ENCODE measurements at regions of chr1 and their contacts with region 1.

Region 1: GRCh38 chr1:242398351-242398750 is 126.1 kb downstream of the PLD5 start:
- DNase-seq: no peak
- ATAC-seq: no peak
- H3K4me3 ChIP-seq: no peak overlapping the region
- H3K27ac ChIP-seq: no peak overlapping the region
- H3K4me1 ChIP-seq: no peaks in the 10 kb centered on the region
- H3K27me3 ChIP-seq: no peaks in the 10 kb centered on the region

Region 2: DNA sequence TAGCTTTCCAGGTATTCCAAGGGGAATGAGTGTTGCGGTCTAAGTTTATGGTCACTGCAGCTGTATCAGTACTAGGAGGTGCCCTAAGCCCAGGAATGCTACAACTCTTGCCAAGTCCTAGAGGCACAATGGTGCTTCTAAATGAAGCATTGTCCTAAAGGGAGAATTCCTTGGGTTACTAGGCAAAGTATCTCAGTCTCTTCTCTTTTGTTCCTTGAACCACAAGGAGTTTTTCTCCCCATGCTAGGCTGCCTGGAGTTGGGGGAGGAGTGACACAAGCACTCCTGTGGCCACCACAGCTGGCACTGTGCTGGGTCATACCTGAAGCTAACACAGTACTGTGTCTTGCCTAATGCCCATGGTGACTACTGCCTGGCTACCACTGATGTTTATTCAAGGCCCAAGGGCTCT is 815.4 kb before region 1 on chr1:
- intact Hi-C with region 1: loop called in 1 of 2 experiments (anchors 10 kb)
- DNase-seq: no peak
- ATAC-seq: no peak
- H3K4me3 ChIP-seq: no peak overlapping the region
- H3K27ac ChIP-seq: no peak overlapping the region
- H3K4me1 ChIP-seq: no peaks in the 10 kb centered on the region
- H3K27me3 ChIP-seq: peaks cover 0 to 1% of the 10 kb centered on the region in 2 donors

Region 3: DNA sequence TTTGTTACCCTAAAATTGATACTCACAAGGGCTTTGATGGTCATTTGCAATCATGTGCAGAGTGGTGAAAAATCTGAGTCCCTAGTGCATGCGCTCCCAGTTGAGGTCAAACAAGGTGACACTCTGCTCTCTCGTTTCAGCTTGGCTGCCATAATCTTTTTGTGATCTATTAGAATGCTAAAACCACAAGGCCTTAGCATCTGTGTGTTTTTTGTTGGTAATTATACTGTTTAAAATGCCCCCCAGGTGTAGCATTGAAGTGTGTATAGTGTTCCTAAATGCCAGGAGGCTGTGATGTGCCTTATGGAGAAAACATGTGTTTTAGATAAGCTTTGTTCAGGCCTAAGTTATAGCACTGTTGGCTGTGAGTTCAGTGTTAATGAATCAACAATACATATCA is 36.8 kb after region 1 on chr1:
- intact Hi-C with region 1: no loop called
- DNase-seq: no peak
- ATAC-seq: no peak
- H3K4me3 ChIP-seq: no peak overlapping the region
- H3K27ac ChIP-seq: no peak overlapping the region
- H3K4me1 ChIP-seq: no peaks in the 10 kb centered on the region
- H3K27me3 ChIP-seq: no peaks in the 10 kb centered on the region

Region 4: DNA sequence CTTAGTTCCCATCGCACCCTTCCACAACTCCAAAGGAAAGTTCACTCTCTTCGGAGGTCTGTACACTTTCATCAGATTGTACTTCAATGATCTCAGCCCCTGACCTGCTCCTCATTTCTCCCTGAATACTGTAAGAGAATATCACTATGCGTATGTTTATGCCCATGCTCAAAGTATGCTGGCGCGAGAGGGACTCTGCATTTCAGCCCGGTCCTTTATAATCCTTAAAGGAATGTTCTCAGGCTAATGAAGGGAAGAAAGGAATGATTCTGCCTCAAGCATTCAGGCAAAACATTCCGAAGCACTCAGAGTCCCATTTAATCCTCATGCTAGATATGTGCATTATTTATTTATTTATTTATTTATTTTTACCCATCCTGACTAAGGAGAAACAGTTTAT is 49.3 kb after region 1 on chr1:
- intact Hi-C with region 1: no loop called
- DNase-seq: no peak
- ATAC-seq: no peak
- H3K4me3 ChIP-seq: no peak overlapping the region
- H3K27ac ChIP-seq: no peak overlapping the region
- H3K4me1 ChIP-seq: peaks cover 0 to 3% of the 10 kb centered on the region in 2 donors
- H3K27me3 ChIP-seq: no peaks in the 10 kb centered on the region

Measured in aorta (tissue), 5 donors.